ENCODE measurements at regions of chr1 and their contacts with region 1.

Region 1: GRCh38 chr1:74652597-74653139 is 20.9 kb downstream of the ERICH3 start:
- DNase-seq: peak; percentile 23
- ATAC-seq: peak; percentile 96
- H3K4me3 Mint-ChIP-seq: peak overlapping the region; percentile 44
- H3K27ac Mint-ChIP-seq: peak overlapping the region; percentile 77
- H3K4me1 Mint-ChIP-seq: peaks cover 31% of the 10 kb centered on the region
- H3K27me3 Mint-ChIP-seq: no peaks in the 10 kb centered on the region
- CTCF ChIP-seq: no peak

Region 2: GRCh38 chr1:74197657-74198552 is 454.8 kb before region 1 on chr1 and contains the starts of genes FPGT and LRRIQ3:
- CTCF ChIA-PET with region 1: no interaction called
- POLR2A ChIA-PET with region 1: no interaction called
- intact Hi-C with region 1: loop called (anchors 2 kb)
- DNase-seq: peak; percentile 94
- ATAC-seq: peak; percentile 96
- H3K4me3 Mint-ChIP-seq: peak within 1 kb of the TSS; percentile 87
- H3K27ac Mint-ChIP-seq: peak within 1 kb of the TSS; percentile 92
- H3K4me1 Mint-ChIP-seq: peaks cover 27% of the 10 kb centered on the region
- H3K27me3 Mint-ChIP-seq: no peaks in the 10 kb centered on the region
- CTCF ChIP-seq: no peak
- total RNA-seq, gene FPGT: 10.1 and 12.0 TPM in 2 replicates
- total RNA-seq, gene LRRIQ3: 1.00 and 1.5 TPM in 2 replicates

Region 3: GRCh38 chr1:74673351-74674111 is 20.9 kb after region 1 on chr1 and contains the start of gene ERICH3:
- CTCF ChIA-PET with region 1: no interaction called
- POLR2A ChIA-PET with region 1: no interaction called
- intact Hi-C with region 1: loop called (anchors 1 kb)
- DNase-seq: no peak
- ATAC-seq: peak; percentile 21
- H3K4me3 Mint-ChIP-seq: peak within 1 kb of the TSS; percentile 53
- H3K27ac Mint-ChIP-seq: no peak within 1 kb of the TSS
- H3K4me1 Mint-ChIP-seq: peaks cover 20% of the 10 kb centered on the region
- H3K27me3 Mint-ChIP-seq: peaks cover 23% of the 10 kb centered on the region
- CTCF ChIP-seq: no peak
- total RNA-seq, gene ERICH3: 0.44 and 0.49 TPM in 2 replicates

Region 4: DNA sequence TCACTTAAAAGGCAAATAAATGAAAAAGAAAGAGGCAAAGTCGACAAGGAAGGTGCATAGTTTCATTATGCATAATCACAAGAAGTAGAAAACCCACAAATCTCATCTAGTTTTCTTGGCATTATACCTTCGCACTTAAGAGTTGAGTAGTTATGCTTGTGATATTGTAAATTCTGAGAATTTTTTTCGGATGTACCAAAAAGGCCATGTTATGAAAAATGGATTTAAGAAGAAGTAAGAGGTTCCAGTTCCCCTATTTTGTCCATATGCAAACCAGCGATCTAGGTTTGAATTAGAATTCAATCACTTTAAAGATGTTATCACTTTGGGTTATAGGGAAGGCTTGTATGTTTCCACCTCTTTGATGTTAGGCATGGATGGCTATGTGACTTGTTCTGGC is 28.8 kb after region 1 on chr1:
- CTCF ChIA-PET with region 1: no interaction called
- POLR2A ChIA-PET with region 1: interaction called, 5 read pairs
- intact Hi-C with region 1: loop called (anchors 1 kb)
- DNase-seq: no peak
- ATAC-seq: peak; percentile 68
- H3K4me3 Mint-ChIP-seq: peak overlapping the region; percentile 2
- H3K27ac Mint-ChIP-seq: no peak overlapping the region
- H3K4me1 Mint-ChIP-seq: peaks cover 12% of the 10 kb centered on the region
- H3K27me3 Mint-ChIP-seq: no peaks in the 10 kb centered on the region
- CTCF ChIP-seq: no peak

Region 5: DNA sequence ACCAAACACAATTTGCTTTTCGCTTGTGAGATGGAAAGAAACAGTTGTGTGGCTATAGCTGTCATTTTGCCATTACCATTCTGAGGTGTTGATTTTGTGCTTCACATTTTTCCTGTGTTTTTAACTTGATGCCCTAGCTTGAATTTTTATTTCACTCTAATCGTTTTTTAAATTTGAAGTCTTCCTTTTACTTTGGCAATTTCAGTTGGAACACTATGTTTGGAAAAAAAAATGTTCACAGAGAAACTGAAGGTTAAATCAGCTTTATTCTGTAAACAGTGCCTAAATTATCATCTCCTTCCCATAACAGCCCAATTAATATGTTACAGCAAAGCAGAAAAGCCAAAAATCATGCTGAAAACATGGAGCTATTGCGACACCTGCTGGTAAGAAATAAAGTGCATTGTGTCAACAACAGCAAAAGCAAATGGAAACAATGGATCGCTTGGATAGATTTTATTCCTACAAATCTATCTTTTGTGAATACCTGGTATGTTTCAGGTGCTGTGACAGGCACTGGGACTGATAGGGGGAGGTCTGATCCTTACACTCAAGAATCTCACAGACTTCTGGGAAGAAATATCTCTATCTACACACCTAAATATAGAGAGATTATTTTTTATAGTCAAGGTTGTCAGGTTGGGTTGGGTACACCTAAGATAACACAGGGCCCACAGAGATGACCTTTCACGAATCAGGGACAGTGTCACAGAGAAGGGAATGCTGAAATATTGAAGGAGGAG is 37.1 kb after region 1 on chr1:
- CTCF ChIA-PET with region 1: interaction called, 11 read pairs
- POLR2A ChIA-PET with region 1: no interaction called
- intact Hi-C with region 1: no loop called
- DNase-seq: no peak
- ATAC-seq: no peak
- H3K4me3 Mint-ChIP-seq: no peak overlapping the region
- H3K27ac Mint-ChIP-seq: no peak overlapping the region
- H3K4me1 Mint-ChIP-seq: no peaks in the 10 kb centered on the region
- H3K27me3 Mint-ChIP-seq: no peaks in the 10 kb centered on the region
- CTCF ChIP-seq: peak; percentile 21

Region 6: DNA sequence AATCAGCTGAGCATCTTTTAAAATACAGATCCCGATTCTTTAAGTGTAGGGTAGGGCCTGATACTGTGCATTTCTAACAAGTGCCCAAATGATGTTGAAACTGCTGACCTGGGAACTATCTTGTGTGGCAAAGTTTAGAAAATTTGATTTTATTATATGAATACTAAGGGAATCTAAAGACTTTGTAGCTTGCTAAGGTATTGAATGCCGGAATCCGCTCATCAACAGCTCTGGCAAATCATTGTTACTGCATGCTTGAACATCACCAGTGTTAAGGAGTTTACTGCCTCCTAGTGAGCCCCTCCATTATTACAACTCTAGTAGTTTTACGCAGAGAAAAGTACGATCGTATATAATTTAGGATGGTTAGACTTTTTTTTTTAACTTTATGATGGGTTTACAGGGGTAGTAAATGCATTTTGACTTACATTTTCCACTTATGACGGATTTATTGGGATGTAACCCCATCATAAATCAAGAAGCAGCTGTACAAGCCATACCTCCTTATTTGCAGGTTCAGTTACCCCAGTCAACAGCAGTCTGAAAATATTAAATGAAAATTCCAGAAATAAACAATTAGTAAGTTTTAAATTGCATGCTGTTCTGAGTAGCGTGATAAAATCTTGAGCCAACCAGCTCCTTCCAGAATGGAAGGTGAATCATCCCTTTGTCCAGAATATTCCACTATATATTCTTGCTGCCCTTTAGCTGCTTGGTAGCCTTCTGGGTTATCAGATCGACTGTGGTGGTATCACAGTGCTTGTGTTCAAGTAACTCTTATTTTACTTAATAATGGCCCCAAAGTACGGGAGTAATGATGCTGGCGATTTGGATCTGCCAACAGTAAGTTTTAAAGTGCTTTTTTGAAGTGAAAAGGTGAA is 81.2 kb after region 1 on chr1:
- CTCF ChIA-PET with region 1: interaction called, 4 read pairs
- POLR2A ChIA-PET with region 1: interaction called, 3 read pairs
- intact Hi-C with region 1: loop called (anchors 1 kb)
- DNase-seq: no peak
- ATAC-seq: peak; percentile 61
- H3K4me3 Mint-ChIP-seq: peak overlapping the region; percentile 96
- H3K27ac Mint-ChIP-seq: peak overlapping the region; percentile 97
- H3K4me1 Mint-ChIP-seq: peaks cover 40% of the 10 kb centered on the region
- H3K27me3 Mint-ChIP-seq: no peaks in the 10 kb centered on the region
- CTCF ChIP-seq: no peak

Measured in activated B cell treated with CpG ODN at 0.5 μM for 24 hours (primary cell).